ENCODE measurements at regions of chr5 and their contacts with region 1.

Region 1: GRCh38 chr5:73081093-73081492 is 39.3 kb upstream of the TMEM171 start:
- DNase-seq: no peak
- ATAC-seq: no peak

Region 2: DNA sequence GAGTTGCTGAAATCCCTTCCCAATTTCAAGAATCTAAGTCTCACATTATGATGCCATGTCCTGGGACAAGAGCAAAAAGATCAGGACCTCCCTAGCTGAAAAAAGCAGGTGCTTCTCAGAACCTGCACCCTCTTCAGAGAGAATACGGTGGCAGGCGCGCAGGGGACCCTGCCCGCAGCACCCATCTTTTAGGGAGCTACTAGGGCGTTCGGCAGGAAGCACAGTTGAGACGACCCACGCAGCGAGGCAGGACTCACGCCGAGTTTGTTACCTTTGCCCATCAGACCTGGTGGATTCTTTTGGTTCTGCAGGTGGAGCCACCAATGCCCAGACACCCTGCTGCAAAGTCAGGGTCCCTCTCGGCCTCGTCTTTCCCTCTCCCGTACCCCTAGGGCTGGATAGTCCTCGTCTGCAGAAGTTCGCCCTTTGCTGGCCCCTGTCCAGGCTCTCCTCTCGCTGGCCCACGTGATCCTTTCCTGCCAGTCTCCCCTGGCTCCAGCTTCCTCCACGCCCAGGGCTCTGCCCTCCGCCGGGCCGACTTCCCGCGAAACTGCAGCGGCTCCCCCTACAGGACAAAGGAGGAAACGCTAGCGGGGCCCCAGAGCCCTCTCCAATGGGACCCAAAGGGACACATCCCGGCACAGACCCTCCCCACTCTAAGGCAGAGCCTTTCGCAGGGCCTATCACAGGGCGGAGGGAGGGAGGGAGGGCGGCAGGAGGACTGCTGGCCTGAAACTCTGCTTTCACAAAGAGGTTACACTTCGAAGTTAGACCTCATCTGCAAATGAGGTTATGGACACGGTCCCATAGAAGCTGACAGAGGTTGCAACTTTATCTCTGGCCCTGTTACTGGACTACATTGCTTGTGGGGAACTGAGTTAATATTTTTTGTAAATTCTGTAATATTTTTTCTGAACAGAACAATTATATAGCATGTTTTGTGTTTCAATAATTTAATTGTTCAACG is 120.7 kb after region 1 on chr5:
- intact Hi-C with region 1: loop called in 1 of 2 experiments (anchors 5 kb)
- DNase-seq: peak; percentile 73
- ATAC-seq: peak; percentile 86 to 87

Region 3: DNA sequence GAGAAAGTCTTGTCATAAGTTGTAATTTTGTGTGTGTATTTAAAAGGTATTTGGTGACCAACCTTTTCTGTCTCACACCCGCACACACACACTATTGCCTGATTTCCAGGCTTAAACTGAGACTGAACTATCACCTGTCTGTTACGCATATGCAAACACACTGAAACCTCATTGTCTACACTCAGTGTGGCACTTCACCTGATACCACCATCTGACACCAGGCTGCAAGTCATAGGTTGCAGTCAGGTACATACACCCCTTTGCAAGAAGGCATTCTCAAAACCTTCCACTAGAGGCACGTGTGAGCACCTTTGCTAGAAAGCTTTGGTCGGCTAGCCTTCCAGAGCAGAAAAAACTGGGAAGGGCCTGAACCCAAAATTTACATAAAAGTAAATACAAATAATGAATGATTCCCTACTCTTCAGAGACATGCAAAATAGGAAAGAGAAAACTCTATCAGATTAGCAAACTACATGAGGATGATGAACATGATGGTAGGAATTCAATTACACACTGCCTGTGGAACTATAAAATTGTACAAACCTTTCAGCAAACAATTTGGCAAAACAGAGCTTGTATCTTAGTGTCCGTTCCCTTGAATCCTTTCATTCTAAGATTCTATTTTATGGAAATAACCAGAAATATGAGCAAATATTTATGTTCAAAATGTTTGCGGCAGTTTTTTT is 373.4 kb after region 1 on chr5:
- intact Hi-C with region 1: loop called in 1 of 2 experiments (anchors 5 kb)
- DNase-seq: no peak
- ATAC-seq: peak in 1 of 2 donors; percentile 65